ENCODE measurements at regions of chr20 and their contacts with region 1.

Region 1: DNA sequence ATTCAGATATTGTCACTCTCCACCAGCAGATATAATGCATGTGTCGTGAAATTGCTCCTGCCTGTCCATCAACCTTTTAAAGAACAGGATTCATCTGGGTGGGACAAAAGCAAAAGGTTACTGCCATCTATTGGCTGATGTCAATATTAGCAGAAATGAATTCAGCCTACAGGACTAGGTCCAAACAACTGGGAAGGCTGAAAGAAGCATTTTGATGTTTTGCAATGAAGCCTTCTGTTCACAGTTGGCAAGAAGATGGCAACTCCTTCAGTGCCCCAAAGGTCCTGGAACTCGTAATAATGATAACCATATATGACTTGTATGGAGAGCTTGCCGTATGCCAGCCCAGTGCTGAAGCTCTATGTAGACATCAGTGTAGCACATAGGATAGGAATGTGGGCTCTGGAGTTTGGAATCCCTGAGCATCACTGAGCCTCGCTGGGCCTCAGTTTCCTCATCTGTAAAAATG is 7.5 kb downstream of the BCAS1 start:
- DNase-seq: peak; percentile 5 to 46 (median 31)
- H3K4me3 ChIP-seq: no peak overlapping the region
- H3K4me3 Mint-ChIP-seq: no peak overlapping the region
- H3K27ac ChIP-seq: no peak overlapping the region
- H3K27ac Mint-ChIP-seq: no peak overlapping the region
- H3K4me1 ChIP-seq: no peaks in the 10 kb centered on the region
- H3K4me1 Mint-ChIP-seq: peaks cover 4% of the 10 kb centered on the region
- H3K27me3 ChIP-seq: no peaks in the 10 kb centered on the region
- H3K27me3 Mint-ChIP-seq: peaks cover 0 to 2% (median 1%) of the 10 kb centered on the region in 3 donors
- CTCF ChIP-seq: peak; percentile 73

Region 2: DNA sequence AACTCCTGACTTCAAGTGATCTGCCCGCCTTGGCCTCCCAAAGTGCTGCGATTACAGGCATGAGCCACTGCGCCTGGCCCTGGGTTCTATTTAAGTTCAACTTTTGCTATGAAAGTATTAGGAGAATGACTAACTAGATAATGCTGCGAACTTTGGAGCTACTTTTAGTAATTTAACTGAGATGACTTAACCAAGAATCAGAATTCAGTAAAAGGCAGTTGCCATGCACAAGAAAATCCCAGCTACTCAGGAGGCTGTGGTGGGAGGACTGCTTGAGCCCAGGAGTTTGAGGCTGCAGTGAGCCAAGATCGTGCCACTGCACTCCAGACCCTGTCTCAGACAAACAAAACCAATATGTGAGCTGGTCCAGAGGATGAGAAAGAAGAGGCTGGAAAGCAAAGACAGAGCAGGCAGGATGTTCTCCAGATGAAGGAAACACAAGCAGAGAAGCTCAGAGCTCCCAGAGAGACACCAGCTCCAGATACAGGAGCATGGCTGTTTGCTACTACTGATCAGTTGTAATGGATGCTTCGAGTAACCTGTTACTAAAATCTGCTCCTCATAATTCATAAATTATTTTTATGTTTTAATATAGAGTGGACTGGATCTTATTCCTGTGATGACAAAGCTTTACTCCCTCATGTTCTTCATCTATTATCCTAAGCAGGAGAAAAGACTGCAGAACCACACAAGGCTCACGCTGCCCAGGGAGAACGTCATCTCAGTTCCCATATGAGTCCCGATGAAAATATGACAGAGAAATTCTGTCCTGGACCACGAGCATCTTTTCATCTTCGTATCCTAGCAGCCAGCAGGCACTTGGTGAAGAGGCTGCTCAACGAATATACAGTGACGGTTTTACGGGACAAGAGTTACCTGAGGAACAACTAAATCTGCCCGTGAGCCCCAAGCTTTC is 493.0 kb before region 1 on chr20:
- intact Hi-C with region 1: loop called (anchors 10 kb)
- DNase-seq: no peak
- H3K4me3 ChIP-seq: no peak overlapping the region
- H3K4me3 Mint-ChIP-seq: no peak overlapping the region
- H3K27ac ChIP-seq: no peak overlapping the region
- H3K27ac Mint-ChIP-seq: peak overlapping the region in 5 of 7 donors; percentile 30 to 80 (median 42)
- H3K4me1 ChIP-seq: no peaks in the 10 kb centered on the region
- H3K4me1 Mint-ChIP-seq: peaks cover 5% of the 10 kb centered on the region
- H3K27me3 ChIP-seq: no peaks in the 10 kb centered on the region
- H3K27me3 Mint-ChIP-seq: peaks cover 0 to 3% (median 0%) of the 10 kb centered on the region in 3 donors
- CTCF ChIP-seq: no peak

Region 3: GRCh38 chr20:54025251-54025771 is 37.5 kb before region 1 on chr20:
- intact Hi-C with region 1: no loop called
- DNase-seq: no peak
- H3K4me3 ChIP-seq: no peak overlapping the region
- H3K4me3 Mint-ChIP-seq: no peak overlapping the region
- H3K27ac ChIP-seq: no peak overlapping the region
- H3K27ac Mint-ChIP-seq: no peak overlapping the region
- H3K4me1 ChIP-seq: no peaks in the 10 kb centered on the region
- H3K4me1 Mint-ChIP-seq: peaks cover 8% of the 10 kb centered on the region
- H3K27me3 ChIP-seq: no peaks in the 10 kb centered on the region
- H3K27me3 Mint-ChIP-seq: no peaks in the 10 kb centered on the region
- CTCF ChIP-seq: no peak

Region 4: GRCh38 chr20:54397292-54398154 is 334.7 kb after region 1 on chr20:
- intact Hi-C with region 1: no loop called
- DNase-seq: no peak
- H3K4me3 ChIP-seq: no peak overlapping the region
- H3K4me3 Mint-ChIP-seq: no peak overlapping the region
- H3K27ac ChIP-seq: no peak overlapping the region
- H3K27ac Mint-ChIP-seq: no peak overlapping the region
- H3K4me1 ChIP-seq: no peaks in the 10 kb centered on the region
- H3K4me1 Mint-ChIP-seq: no peaks in the 10 kb centered on the region
- H3K27me3 ChIP-seq: no peaks in the 10 kb centered on the region
- H3K27me3 Mint-ChIP-seq: peaks cover 0 to 2% (median 0%) of the 10 kb centered on the region in 3 donors
- CTCF ChIP-seq: no peak